ENCODE measurements at regions of chr5 and their contacts with region 1.

Region 1: DNA sequence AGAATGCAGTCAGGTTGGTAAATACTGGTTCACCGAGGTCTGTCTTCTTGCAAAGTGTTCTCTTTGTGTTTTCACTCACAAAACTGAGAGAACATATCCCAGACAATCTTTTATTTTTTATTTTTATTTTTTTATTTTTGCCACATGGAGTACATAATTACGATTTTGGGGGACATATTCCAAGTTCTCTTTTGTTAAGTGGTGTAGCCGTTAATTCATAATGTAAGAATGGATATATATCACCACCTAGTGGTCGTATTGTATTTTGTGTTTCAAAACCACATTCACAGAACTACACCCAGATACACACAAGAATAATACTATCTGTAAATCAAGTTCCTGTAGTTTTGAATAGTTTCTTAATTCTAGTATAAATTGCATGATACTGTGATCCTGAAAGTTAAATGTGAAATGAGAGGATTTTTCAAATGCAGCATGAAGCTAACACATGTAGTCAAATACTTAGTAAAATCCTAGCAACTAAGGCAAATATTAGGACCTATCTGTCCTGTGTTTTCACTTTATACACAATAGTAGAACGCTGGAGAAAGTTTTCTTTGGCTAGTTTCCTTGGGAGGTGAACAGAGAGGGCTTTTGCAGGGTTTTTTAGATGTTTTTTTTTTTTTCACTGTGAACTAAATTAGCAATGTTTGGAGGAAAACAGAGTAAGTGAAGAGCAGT is 92.7 kb downstream of the VCAN start:
- DNase-seq: no peak
- ATAC-seq: peak; percentile 84
- H3K4me3 ChIP-seq: no peak overlapping the region
- H3K27ac ChIP-seq: no peak overlapping the region
- H3K4me1 ChIP-seq: no peaks in the 10 kb centered on the region
- H3K27me3 ChIP-seq: peaks cover 0 to 2% of the 10 kb centered on the region in 2 experiments; a peak in 1 of 4 replicates
- CTCF ChIP-seq: peak; percentile 20 to 68 (median 52); a peak in 5 of 6 replicates
- EP300 ChIP-seq: no peak
- POLR2A ChIP-seq: no peak
- RAD21 ChIP-seq: peak; percentile 76

Region 2: DNA sequence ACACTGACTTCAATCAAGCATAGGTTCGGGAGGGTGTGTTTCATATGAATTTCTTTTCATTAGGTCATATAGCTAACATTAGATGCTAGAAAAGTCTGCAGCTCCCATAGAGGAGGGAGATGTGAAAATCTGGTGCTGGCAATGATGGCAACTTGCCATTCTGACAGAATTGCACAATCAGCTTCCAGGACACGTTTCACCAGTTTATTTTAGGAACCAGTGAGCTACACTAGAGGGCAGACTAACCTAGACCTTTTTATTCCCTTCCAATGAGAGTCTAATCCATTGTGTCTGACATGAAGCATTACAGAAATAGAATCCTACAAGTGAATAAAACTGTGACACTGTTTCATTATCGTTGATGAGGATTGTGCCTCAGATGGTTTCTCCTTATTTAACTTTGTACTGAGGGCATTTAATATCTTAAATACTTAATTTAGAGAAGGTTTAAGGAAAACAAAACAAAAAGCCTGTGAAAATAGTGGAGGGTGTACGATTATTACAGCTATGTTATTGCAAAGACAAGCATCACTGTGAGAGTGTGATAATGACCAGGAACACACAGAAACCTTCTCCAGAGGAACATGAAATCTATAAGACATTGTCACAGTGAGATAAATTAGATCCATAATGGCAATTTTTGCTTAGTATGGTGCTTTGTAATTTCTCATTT is 922.7 kb before region 1 on chr5:
- CTCF ChIA-PET with region 1: interaction called, 8 read pairs
- POLR2A ChIA-PET with region 1: no interaction called
- RAD21 ChIA-PET with region 1: interaction called, 5 read pairs
- SMC1A ChIA-PET with region 1: interaction called, 11 read pairs
- in situ Hi-C with region 1: loop called (anchors 10 kb)
- intact Hi-C with region 1: loop called (anchors 1 kb)
- DNase-seq: peak; percentile 19
- ATAC-seq: peak; percentile 87
- H3K4me3 ChIP-seq: no peak overlapping the region
- H3K27ac ChIP-seq: no peak overlapping the region
- H3K4me1 ChIP-seq: no peaks in the 10 kb centered on the region
- H3K27me3 ChIP-seq: no peaks in the 10 kb centered on the region; a peak in 1 of 4 replicates
- CTCF ChIP-seq: peak; percentile 58 to 72 (median 61); a peak in 5 of 6 replicates
- EP300 ChIP-seq: no peak
- POLR2A ChIP-seq: no peak
- RAD21 ChIP-seq: peak; percentile 94

Region 3: GRCh38 chr5:83076742-83077661 is 487.2 kb before region 1 on chr5 and contains the starts of genes TMEM167A and XRCC4:
- CTCF ChIA-PET with region 1: no interaction called
- POLR2A ChIA-PET with region 1: no interaction called
- RAD21 ChIA-PET with region 1: no interaction called
- SMC1A ChIA-PET with region 1: no interaction called
- in situ Hi-C with region 1: no loop called
- intact Hi-C with region 1: loop called (anchors 10 kb)
- DNase-seq: peak; percentile 96
- ATAC-seq: peak; percentile 98
- H3K4me3 ChIP-seq: peak within 1 kb of the TSS; percentile 87
- H3K27ac ChIP-seq: peak within 1 kb of the TSS; percentile 94
- H3K4me1 ChIP-seq: no peaks in the 10 kb centered on the region
- H3K27me3 ChIP-seq: no peaks in the 10 kb centered on the region
- CTCF ChIP-seq: no peak
- EP300 ChIP-seq: no peak; a peak in 1 of 4 replicates
- POLR2A ChIP-seq: peak; percentile 99
- RAD21 ChIP-seq: peak; percentile 6; the same call in 1 of the 2 replicates
- polyA plus RNA-seq, gene TMEM167A: 314 to 363 TPM
- polyA plus RNA-seq, gene XRCC4: 49.2 to 53.6 TPM

Region 4: DNA sequence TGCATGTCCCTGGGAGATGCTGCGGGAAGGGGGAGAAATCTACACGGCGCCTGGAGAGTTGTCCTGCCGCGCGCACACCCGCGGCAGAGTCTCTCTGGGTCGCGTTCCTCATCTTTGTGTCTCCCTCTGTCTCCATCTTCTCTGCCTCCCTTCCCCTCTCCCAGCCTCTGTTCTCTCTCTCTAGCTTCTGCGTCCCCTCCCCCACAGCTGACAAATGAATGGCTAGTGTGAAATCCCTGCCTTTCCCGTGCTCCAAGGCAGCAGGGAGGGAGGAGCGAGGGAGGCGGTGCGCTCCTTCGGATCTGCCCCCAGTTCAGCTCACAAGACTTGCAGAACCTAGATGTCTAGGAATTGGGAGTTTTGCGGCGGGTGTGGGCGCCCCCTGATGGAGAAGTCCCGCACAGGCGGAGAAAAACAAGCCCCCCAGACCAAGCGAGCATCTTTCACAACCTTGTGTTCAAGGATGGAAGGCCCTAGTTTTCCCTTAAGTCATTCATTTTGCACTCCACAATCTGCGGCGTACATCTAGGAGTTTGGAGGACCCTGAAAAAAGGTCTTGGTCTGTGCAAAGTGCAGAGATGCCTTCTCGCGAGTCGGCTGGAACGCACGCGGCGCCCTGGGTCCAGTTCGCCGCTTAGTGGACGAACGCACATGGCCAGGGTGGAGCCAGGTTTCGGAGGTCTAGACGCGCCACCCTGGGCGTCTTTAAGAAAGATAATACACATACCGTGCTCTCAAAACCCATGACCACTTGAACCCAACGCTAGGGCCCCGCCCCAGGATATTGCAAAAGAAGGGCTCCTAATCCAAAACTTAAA is 90.7 kb before region 1 on chr5:
- CTCF ChIA-PET with region 1: no interaction called
- POLR2A ChIA-PET with region 1: no interaction called
- RAD21 ChIA-PET with region 1: no interaction called
- SMC1A ChIA-PET with region 1: no interaction called
- in situ Hi-C with region 1: no loop called
- intact Hi-C with region 1: loop called (anchors 5 kb)
- DNase-seq: peak; percentile 24
- ATAC-seq: peak; percentile 83
- H3K4me3 ChIP-seq: peak overlapping the region; percentile 78
- H3K27ac ChIP-seq: no peak overlapping the region
- H3K4me1 ChIP-seq: 0 out of 2 replicates have a peak, but pooled peaks cover 10% of the 10 kb centered on the region
- H3K27me3 ChIP-seq: peaks cover 15 to 17% of the 10 kb centered on the region in 2 experiments
- CTCF ChIP-seq: peak; percentile 73 to 85 (median 83)
- EP300 ChIP-seq: no peak
- POLR2A ChIP-seq: no peak
- RAD21 ChIP-seq: peak; percentile 84